Activated naive CD4-positive, alpha-beta T cell treated with anti-CD3 and anti-CD28 coated beads for 36 hours (primary cell): ENCODE measurements at regions of chr12 and their contacts with region 1.

Region 1: GRCh38 chr12:49098035-49098451 is 3.4 kb upstream of the DHH start:
- DNase-seq: peak; percentile 76
- H3K4me3 Mint-ChIP-seq: no peak overlapping the region
- H3K27ac Mint-ChIP-seq: no peak overlapping the region
- H3K4me1 Mint-ChIP-seq: peaks cover 10% of the 10 kb centered on the region
- H3K27me3 Mint-ChIP-seq: peaks cover 21% of the 10 kb centered on the region

Region 2: GRCh38 chr12:49069507-49070346 is 28.3 kb before region 1 on chr12 and contains the start of gene RHEBL1:
- CTCF ChIA-PET with region 1: interaction called, 73 read pairs
- intact Hi-C with region 1: loop called (anchors 1 kb)
- DNase-seq: peak; percentile 100
- H3K4me3 Mint-ChIP-seq: peak within 1 kb of the TSS; percentile 99
- H3K27ac Mint-ChIP-seq: peak within 1 kb of the TSS; percentile 76
- H3K4me1 Mint-ChIP-seq: peaks cover 12% of the 10 kb centered on the region
- H3K27me3 Mint-ChIP-seq: no peaks in the 10 kb centered on the region
- total RNA-seq, gene RHEBL1: 11.8 to 15.2 TPM

Region 3: DNA sequence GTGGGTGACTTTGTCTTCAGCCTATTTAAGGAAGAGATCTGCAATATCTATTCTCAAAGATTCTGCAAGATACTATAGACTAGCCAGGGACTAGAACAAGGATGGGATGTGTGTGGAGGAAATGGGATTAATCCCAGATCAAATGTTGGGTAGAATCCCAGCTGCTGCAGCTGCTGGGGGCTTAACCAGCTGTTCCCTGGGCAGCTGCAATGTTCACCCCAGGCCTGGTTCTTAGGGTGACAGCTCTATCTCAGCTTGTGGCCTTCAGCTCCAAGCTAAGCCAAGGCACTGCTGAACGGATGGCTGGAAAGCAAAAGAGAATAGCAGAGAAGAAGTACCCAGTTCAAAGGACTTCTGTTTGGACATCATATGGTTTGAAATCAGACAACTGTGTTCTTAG is 18.2 kb before region 1 on chr12:
- CTCF ChIA-PET with region 1: interaction called, 209 read pairs
- intact Hi-C with region 1: no loop called
- DNase-seq: no peak
- H3K4me3 Mint-ChIP-seq: no peak overlapping the region
- H3K27ac Mint-ChIP-seq: no peak overlapping the region
- H3K4me1 Mint-ChIP-seq: no peaks in the 10 kb centered on the region
- H3K27me3 Mint-ChIP-seq: peaks cover 2% of the 10 kb centered on the region

Region 4: GRCh38 chr12:49110464-49111155 is 12.6 kb after region 1 on chr12 and contains the start of gene LMBR1L:
- CTCF ChIA-PET with region 1: interaction called, 44 read pairs
- intact Hi-C with region 1: no loop called
- DNase-seq: peak; percentile 98
- H3K4me3 Mint-ChIP-seq: peak within 1 kb of the TSS; percentile 93
- H3K27ac Mint-ChIP-seq: peak within 1 kb of the TSS; percentile 94
- H3K4me1 Mint-ChIP-seq: peaks cover 37% of the 10 kb centered on the region
- H3K27me3 Mint-ChIP-seq: no peaks in the 10 kb centered on the region
- total RNA-seq, gene LMBR1L: 60.1 to 66.8 TPM

Region 5: GRCh38 chr12:49121047-49121696 is 23.1 kb after region 1 on chr12:
- CTCF ChIA-PET with region 1: interaction called, 35 read pairs
- intact Hi-C with region 1: no loop called
- DNase-seq: peak; percentile 24
- H3K4me3 Mint-ChIP-seq: no peak overlapping the region
- H3K27ac Mint-ChIP-seq: no peak overlapping the region
- H3K4me1 Mint-ChIP-seq: no peaks in the 10 kb centered on the region
- H3K27me3 Mint-ChIP-seq: no peaks in the 10 kb centered on the region

Region 6: GRCh38 chr12:49413796-49414195 is 315.8 kb after region 1 on chr12:
- CTCF ChIA-PET with region 1: no interaction called
- intact Hi-C with region 1: no loop called
- DNase-seq: no peak
- H3K4me3 Mint-ChIP-seq: no peak overlapping the region
- H3K27ac Mint-ChIP-seq: no peak overlapping the region
- H3K4me1 Mint-ChIP-seq: no peaks in the 10 kb centered on the region
- H3K27me3 Mint-ChIP-seq: no peaks in the 10 kb centered on the region